ENCODE measurements at regions of chr3 and their contacts with region 1.

Region 1: GRCh38 chr3:45224824-45225464 is 1.1 kb downstream of the TMEM158 start:
- DNase-seq: peak; percentile 88
- H3K4me3 ChIP-seq: peak overlapping the region; percentile 93
- H3K27ac ChIP-seq: peak overlapping the region; percentile 33
- H3K4me1 ChIP-seq: 0 out of 2 replicates have a peak, but pooled peaks cover 11% of the 10 kb centered on the region
- H3K27me3 ChIP-seq: no peaks in the 10 kb centered on the region

Region 2: DNA sequence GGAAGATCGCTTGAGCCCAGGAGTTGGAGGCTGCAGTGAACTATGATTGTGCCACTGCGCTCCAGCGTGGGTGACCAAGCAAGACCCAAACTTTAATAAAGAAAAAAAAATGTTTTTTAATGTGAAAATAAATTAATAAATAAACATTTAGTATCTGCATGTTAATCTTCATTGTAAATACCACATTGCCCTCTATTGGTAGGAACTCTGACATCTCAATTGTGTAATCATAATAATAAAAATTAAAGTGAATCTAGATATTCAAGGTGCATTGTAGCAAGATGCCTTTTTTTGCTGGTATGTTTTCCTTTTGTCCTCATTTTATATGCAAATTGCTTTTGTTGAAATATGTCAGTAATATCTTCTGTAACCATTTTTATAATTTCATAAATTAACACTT is 274.6 kb after region 1 on chr3:
- in situ Hi-C with region 1: loop called (anchors 5 kb)
- DNase-seq: peak; percentile 64
- H3K4me3 ChIP-seq: no peak overlapping the region
- H3K27ac ChIP-seq: no peak overlapping the region
- H3K4me1 ChIP-seq: no peaks in the 10 kb centered on the region
- H3K27me3 ChIP-seq: no peaks in the 10 kb centered on the region